IMR-90 (cell line): ENCODE measurements at regions of chr11 and their contacts with region 1.

Region 1: GRCh38 chr11:93213622-93214021 is 15.8 kb upstream of the SLC36A4 start:
- DNase-seq: no peak
- ATAC-seq: no peak
- H3K4me3 ChIP-seq: no peak overlapping the region
- H3K27ac ChIP-seq: no peak overlapping the region
- H3K4me1 ChIP-seq: no peaks in the 10 kb centered on the region
- H3K27me3 ChIP-seq: peaks cover 4% of the 10 kb centered on the region
- CTCF ChIP-seq: no peak
- POLR2A ChIP-seq: no peak
- RAD21 ChIP-seq: no peak

Region 2: GRCh38 chr11:92460213-92460612 is 753.4 kb before region 1 on chr11:
- CTCF ChIA-PET with region 1: no interaction called
- POLR2A ChIA-PET with region 1: no interaction called
- dilution Hi-C with region 1: no loop called
- in situ Hi-C with region 1: no loop called
- intact Hi-C with region 1: loop called (anchors 5 kb)
- DNase-seq: no peak
- ATAC-seq: no peak
- H3K4me3 ChIP-seq: no peak overlapping the region
- H3K27ac ChIP-seq: no peak overlapping the region
- H3K4me1 ChIP-seq: no peaks in the 10 kb centered on the region
- H3K27me3 ChIP-seq: no peaks in the 10 kb centered on the region
- CTCF ChIP-seq: no peak
- POLR2A ChIP-seq: no peak
- RAD21 ChIP-seq: no peak

Region 3: GRCh38 chr11:92917927-92918326 is 295.7 kb before region 1 on chr11:
- CTCF ChIA-PET with region 1: no interaction called
- POLR2A ChIA-PET with region 1: no interaction called
- dilution Hi-C with region 1: no loop called
- in situ Hi-C with region 1: no loop called
- intact Hi-C with region 1: no loop called
- DNase-seq: no peak
- ATAC-seq: no peak
- H3K4me3 ChIP-seq: no peak overlapping the region
- H3K27ac ChIP-seq: no peak overlapping the region
- H3K4me1 ChIP-seq: no peaks in the 10 kb centered on the region
- H3K27me3 ChIP-seq: no peaks in the 10 kb centered on the region
- CTCF ChIP-seq: no peak
- POLR2A ChIP-seq: no peak
- RAD21 ChIP-seq: no peak